OCI-LY7 (cell line): ENCODE measurements at regions of chr13 and their contacts with region 1.

Region 1: DNA sequence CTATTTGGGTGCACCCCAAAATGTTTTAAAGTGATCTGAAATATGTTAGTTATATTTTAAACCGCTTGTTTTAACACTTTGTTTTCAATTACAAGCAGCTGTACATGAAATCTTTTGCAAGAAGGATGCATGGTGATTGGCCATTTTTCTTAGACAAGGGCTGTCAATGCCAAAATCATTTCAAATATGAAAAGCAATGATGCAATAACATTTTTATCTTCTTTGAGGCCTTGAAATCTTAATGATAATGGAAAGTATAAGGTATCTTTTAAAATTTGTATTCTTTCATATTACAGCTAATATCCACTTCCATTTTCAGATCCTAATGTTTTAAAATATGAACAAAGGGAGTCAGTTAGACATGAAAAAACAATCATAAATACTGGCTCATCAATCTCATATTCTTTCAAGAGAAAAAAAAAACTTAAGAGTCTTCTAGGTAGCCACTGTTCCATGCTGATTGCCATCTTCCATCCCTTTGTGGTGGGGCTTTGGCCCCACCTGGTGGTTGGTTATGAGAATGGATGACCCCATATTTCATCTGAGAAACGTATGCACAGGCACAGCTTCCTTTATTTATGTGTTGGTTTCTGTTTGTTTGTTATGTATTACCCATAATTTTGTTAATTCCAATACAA is 330.3 kb upstream of the MIR17HG start:
- DNase-seq: peak; percentile 88
- H3K4me3 ChIP-seq: no peak overlapping the region
- H3K27ac ChIP-seq: no peak overlapping the region
- H3K4me1 ChIP-seq: no peaks in the 10 kb centered on the region
- CTCF ChIP-seq: no peak

Region 2: GRCh38 chr13:90867336-90867683 is 149.8 kb before region 1 on chr13:
- CTCF ChIA-PET with region 1: no interaction called
- POLR2A ChIA-PET with region 1: interaction called, 3 read pairs
- intact Hi-C with region 1: loop called (anchors 2 kb)
- DNase-seq: peak; percentile 82
- H3K4me3 ChIP-seq: no peak overlapping the region
- H3K27ac ChIP-seq: no peak overlapping the region
- H3K4me1 ChIP-seq: peaks cover 3% of the 10 kb centered on the region
- CTCF ChIP-seq: peak; percentile 100

Region 3: GRCh38 chr13:90943946-90944345 is 73.2 kb before region 1 on chr13:
- CTCF ChIA-PET with region 1: no interaction called
- POLR2A ChIA-PET with region 1: interaction called, 5 read pairs
- intact Hi-C with region 1: loop called (anchors 2 kb)
- DNase-seq: no peak
- H3K4me3 ChIP-seq: no peak overlapping the region
- H3K27ac ChIP-seq: no peak overlapping the region
- H3K4me1 ChIP-seq: no peaks in the 10 kb centered on the region
- CTCF ChIP-seq: no peak

Region 4: GRCh38 chr13:90968166-90968904 is 48.8 kb before region 1 on chr13:
- CTCF ChIA-PET with region 1: interaction called, 4 read pairs
- POLR2A ChIA-PET with region 1: interaction called, 3 read pairs
- intact Hi-C with region 1: loop called (anchors 1 kb)
- DNase-seq: peak; percentile 70
- H3K4me3 ChIP-seq: no peak overlapping the region
- H3K27ac ChIP-seq: no peak overlapping the region
- H3K4me1 ChIP-seq: no peaks in the 10 kb centered on the region
- CTCF ChIP-seq: no peak

Region 5: GRCh38 chr13:91031508-91031907 is 14.4 kb after region 1 on chr13:
- CTCF ChIA-PET with region 1: interaction called, 3 read pairs
- POLR2A ChIA-PET with region 1: interaction called, 12 read pairs
- intact Hi-C with region 1: no loop called
- DNase-seq: no peak
- H3K4me3 ChIP-seq: no peak overlapping the region
- H3K27ac ChIP-seq: no peak overlapping the region
- H3K4me1 ChIP-seq: no peaks in the 10 kb centered on the region
- CTCF ChIP-seq: no peak

Region 6: GRCh38 chr13:91036886-91037285 is 19.7 kb after region 1 on chr13:
- CTCF ChIA-PET with region 1: no interaction called
- POLR2A ChIA-PET with region 1: interaction called, 11 read pairs
- intact Hi-C with region 1: no loop called
- DNase-seq: no peak
- H3K4me3 ChIP-seq: no peak overlapping the region
- H3K27ac ChIP-seq: no peak overlapping the region
- H3K4me1 ChIP-seq: no peaks in the 10 kb centered on the region
- CTCF ChIP-seq: no peak

Region 7: GRCh38 chr13:91563799-91564198 is 546.6 kb after region 1 on chr13:
- CTCF ChIA-PET with region 1: no interaction called
- POLR2A ChIA-PET with region 1: no interaction called
- intact Hi-C with region 1: loop called (anchors 5 kb)
- DNase-seq: no peak
- H3K4me3 ChIP-seq: no peak overlapping the region
- H3K27ac ChIP-seq: no peak overlapping the region
- H3K4me1 ChIP-seq: no peaks in the 10 kb centered on the region
- CTCF ChIP-seq: no peak